ENCODE measurements at regions of chr1 and their contacts with region 1.

Region 1: GRCh38 chr1:8015036-8015808 is 10.9 kb downstream of the ERRFI1 start:
- DNase-seq: peak; percentile 91
- ATAC-seq: peak; percentile 12; the same call in 1 of the 2 replicates
- H3K4me3 ChIP-seq: peak overlapping the region; percentile 8; the same call in 1 of the 2 replicates
- H3K27ac ChIP-seq: peak overlapping the region; percentile 39
- H3K4me1 ChIP-seq: peaks cover 51% of the 10 kb centered on the region
- H3K27me3 ChIP-seq: no peaks in the 10 kb centered on the region
- CTCF ChIP-seq: peak; percentile 71

Region 2: DNA sequence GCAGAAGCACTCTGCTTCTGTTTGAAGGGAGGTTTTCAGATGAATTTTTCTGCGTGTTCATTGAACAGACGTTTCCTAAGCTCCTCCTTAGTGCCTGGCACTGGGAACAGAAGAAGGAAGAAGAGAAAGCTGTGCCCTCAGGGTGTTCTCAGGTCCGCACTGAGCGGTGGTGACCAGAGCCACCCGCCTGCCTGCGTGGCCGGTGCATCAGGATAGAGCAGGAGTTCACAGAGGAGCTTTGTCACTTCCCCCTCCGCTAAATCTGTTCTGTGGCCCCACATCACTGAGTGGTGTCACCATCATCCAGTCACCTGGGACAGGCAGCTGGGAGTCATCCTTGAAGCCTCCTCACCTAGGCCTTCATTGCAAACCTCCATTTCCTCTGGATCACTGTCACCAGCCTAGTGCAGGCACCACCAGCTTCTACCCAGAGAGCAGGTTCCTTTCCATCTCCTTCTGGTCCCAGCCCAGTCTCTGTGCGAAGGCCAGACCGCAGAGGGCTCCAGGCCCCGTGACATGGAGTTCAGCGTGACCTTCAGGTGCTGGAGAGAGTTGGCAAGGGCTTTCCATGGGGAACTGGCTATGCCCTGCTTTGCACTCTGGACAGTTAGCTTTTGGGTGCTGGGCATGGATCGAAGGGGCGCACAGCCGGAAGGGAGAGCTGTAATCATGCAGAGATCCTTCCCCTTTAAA is 32.0 kb before region 1 on chr1:
- CTCF ChIA-PET with region 1: no interaction called
- POLR2A ChIA-PET with region 1: no interaction called
- intact Hi-C with region 1: loop called (anchors 1 kb)
- DNase-seq: no peak
- ATAC-seq: no peak
- H3K4me3 ChIP-seq: no peak overlapping the region
- H3K27ac ChIP-seq: peak overlapping the region; percentile 33; the same call in 1 of the 2 replicates
- H3K4me1 ChIP-seq: peaks cover 3% of the 10 kb centered on the region; the same call in 1 of the 2 replicates
- H3K27me3 ChIP-seq: no peaks in the 10 kb centered on the region
- CTCF ChIP-seq: no peak

Region 3: DNA sequence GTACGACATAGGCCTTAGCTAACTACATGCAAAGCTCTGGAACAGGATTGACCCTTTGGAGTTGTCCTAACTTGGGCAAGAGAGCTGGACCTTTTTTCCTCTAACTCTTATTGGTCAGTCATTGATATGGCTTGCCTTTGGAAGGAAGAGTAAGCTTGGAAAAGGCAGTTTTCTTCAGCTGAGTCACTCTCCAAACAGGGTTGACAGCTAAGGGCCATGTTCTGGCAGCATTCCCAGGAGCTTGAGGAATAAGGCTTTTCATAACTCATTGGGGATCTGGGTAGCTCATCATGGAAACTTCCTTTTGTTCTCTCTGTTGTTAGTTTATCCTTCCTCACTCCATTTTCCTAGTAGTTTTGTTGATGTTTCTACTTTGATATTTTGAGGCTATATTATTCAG is 25.4 kb after region 1 on chr1:
- CTCF ChIA-PET with region 1: no interaction called
- POLR2A ChIA-PET with region 1: interaction called, 15 read pairs
- intact Hi-C with region 1: no loop called
- DNase-seq: peak; percentile 99
- ATAC-seq: peak; percentile 97
- H3K4me3 ChIP-seq: no peak overlapping the region
- H3K27ac ChIP-seq: peak overlapping the region; percentile 85
- H3K4me1 ChIP-seq: peaks cover 30% of the 10 kb centered on the region
- H3K27me3 ChIP-seq: no peaks in the 10 kb centered on the region
- CTCF ChIP-seq: no peak

Region 4: GRCh38 chr1:8063298-8064036 is 48.2 kb after region 1 on chr1:
- CTCF ChIA-PET with region 1: no interaction called
- POLR2A ChIA-PET with region 1: no interaction called
- intact Hi-C with region 1: no loop called
- DNase-seq: no peak
- ATAC-seq: no peak
- H3K4me3 ChIP-seq: no peak overlapping the region
- H3K27ac ChIP-seq: peak overlapping the region; percentile 99
- H3K4me1 ChIP-seq: peaks cover 36% of the 10 kb centered on the region
- H3K27me3 ChIP-seq: no peaks in the 10 kb centered on the region
- CTCF ChIP-seq: no peak

Region 5: GRCh38 chr1:8077120-8077573 is 61.9 kb after region 1 on chr1:
- CTCF ChIA-PET with region 1: no interaction called
- POLR2A ChIA-PET with region 1: interaction called, 10 read pairs
- intact Hi-C with region 1: no loop called
- DNase-seq: peak; percentile 89
- ATAC-seq: peak; percentile 93
- H3K4me3 ChIP-seq: no peak overlapping the region
- H3K27ac ChIP-seq: peak overlapping the region; percentile 97
- H3K4me1 ChIP-seq: peaks cover 39% of the 10 kb centered on the region
- H3K27me3 ChIP-seq: no peaks in the 10 kb centered on the region
- CTCF ChIP-seq: no peak

Region 6: GRCh38 chr1:8247811-8248436 is 232.7 kb after region 1 on chr1:
- CTCF ChIA-PET with region 1: no interaction called
- POLR2A ChIA-PET with region 1: interaction called, 11 read pairs
- intact Hi-C with region 1: no loop called
- DNase-seq: no peak
- ATAC-seq: no peak
- H3K4me3 ChIP-seq: no peak overlapping the region
- H3K27ac ChIP-seq: no peak overlapping the region
- H3K4me1 ChIP-seq: no peaks in the 10 kb centered on the region
- H3K27me3 ChIP-seq: no peaks in the 10 kb centered on the region
- CTCF ChIP-seq: no peak

Region 7: DNA sequence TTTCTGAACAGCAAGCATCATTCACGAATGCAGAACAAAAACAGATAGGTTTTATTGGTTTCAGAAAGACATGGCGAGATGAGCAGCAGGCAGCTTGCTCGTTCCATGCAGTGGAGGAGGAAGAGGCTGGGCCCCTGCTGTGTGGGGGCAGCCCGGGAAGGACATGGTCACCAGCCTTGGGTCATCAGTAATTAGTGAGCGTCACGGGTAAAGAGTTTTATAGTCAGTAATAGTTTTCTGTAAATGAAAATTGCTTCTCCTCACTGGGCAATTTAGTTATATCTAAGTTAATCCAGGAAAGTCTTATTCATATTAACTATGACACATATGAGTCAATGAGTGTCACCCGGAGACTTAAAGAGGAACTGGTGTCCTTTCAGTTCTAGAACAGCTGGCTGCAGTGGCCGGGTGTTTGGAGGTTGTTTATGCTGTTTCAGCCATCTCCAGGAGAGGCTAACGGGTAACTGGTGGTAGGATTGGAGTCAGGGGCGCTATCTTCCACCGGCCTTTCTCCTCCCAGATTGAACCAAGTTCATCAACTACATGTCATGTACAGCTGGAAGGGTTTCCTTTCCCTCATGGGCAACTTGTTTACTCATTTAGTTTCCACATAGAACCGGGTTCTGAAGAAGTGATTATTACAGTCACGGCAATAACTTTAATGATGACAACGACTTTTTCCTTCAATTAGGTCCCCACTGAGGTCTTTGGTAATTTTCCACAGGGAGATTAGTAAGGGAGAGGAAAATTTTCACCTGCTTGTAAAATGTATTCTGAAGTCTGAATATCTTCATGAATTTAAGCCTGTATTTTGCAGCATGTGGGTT is 268.0 kb after region 1 on chr1:
- CTCF ChIA-PET with region 1: no interaction called
- POLR2A ChIA-PET with region 1: no interaction called
- intact Hi-C with region 1: no loop called
- DNase-seq: peak; percentile 38
- ATAC-seq: peak; percentile 60
- H3K4me3 ChIP-seq: no peak overlapping the region
- H3K27ac ChIP-seq: peak overlapping the region; percentile 40; the same call in 1 of the 2 replicates
- H3K4me1 ChIP-seq: peaks cover 27% of the 10 kb centered on the region
- H3K27me3 ChIP-seq: no peaks in the 10 kb centered on the region
- CTCF ChIP-seq: no peak

Region 8: DNA sequence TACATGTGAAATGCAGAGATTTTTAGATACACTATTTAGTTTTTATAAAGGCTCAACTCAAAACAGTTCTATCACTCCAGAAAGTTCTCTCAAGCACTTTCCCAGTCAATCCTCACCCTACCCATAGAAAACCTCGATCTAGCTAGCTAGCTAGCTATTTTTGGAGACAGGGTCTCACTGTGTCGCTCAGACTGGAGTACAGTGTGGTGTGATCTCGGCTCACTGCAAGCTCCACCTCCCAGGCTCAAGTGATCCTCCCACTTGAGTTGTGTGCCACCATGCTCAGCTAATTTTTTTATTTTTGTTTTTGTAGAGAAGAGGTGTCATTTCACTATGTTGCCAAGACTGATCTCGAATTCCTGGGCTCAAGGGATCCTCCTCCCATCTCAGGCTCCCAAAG is 565.3 kb after region 1 on chr1:
- CTCF ChIA-PET with region 1: no interaction called
- POLR2A ChIA-PET with region 1: interaction called, 12 read pairs
- intact Hi-C with region 1: no loop called
- DNase-seq: no peak
- ATAC-seq: no peak
- H3K4me3 ChIP-seq: no peak overlapping the region
- H3K27ac ChIP-seq: no peak overlapping the region
- H3K4me1 ChIP-seq: no peaks in the 10 kb centered on the region
- H3K27me3 ChIP-seq: no peaks in the 10 kb centered on the region
- CTCF ChIP-seq: no peak

Region 9: GRCh38 chr1:8925406-8925805 is 910.2 kb after region 1 on chr1:
- CTCF ChIA-PET with region 1: no interaction called
- POLR2A ChIA-PET with region 1: no interaction called
- intact Hi-C with region 1: no loop called
- DNase-seq: no peak
- ATAC-seq: no peak
- H3K4me3 ChIP-seq: no peak overlapping the region
- H3K27ac ChIP-seq: no peak overlapping the region
- H3K4me1 ChIP-seq: no peaks in the 10 kb centered on the region
- H3K27me3 ChIP-seq: no peaks in the 10 kb centered on the region
- CTCF ChIP-seq: no peak

Measured in PC-3 (cell line).